ENCODE measurements at regions of chr12 and their contacts with region 1.

Region 1: GRCh38 chr12:125049093-125049458 is 16.2 kb upstream of the AACS start:
- DNase-seq: no peak
- H3K4me3 Mint-ChIP-seq: peak overlapping the region; percentile 73
- H3K27ac Mint-ChIP-seq: peak overlapping the region; percentile 69
- H3K4me1 Mint-ChIP-seq: peaks cover 8% of the 10 kb centered on the region
- H3K27me3 Mint-ChIP-seq: no peaks in the 10 kb centered on the region

Region 2: DNA sequence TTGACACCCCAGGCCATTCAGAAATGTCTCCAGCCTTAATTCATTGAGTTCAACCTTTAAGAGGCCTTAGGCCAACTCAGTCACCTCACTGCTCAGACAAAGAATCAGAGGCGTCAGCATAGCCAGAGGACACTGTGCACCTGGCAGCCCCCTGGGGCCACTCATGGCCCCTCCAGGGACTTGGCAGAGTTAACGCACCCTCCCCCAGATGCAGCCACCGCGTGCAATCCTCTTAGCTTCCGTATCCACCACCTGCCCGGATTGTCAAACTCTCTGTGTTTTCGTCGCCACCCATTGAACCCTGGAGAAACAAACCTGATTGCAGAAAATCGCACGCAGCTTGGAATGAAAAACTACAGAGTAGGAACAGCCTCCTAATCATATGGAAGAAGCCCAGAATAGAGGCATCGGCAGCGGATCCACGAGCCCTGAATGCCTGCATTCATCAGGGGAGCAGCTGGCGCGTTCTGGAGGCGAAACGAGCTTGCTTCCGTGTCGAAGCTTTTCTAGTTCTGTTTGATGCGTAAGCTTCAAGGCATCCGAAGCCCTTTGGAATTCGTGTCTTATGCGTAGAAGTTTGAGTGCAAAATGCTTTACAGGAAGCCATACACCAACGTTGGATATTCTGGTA is 33.3 kb before region 1 on chr12:
- CTCF ChIA-PET with region 1: no interaction called
- POLR2A ChIA-PET with region 1: no interaction called
- DNase-seq: no peak
- H3K4me3 Mint-ChIP-seq: no peak overlapping the region
- H3K27ac Mint-ChIP-seq: no peak overlapping the region
- H3K4me1 Mint-ChIP-seq: no peaks in the 10 kb centered on the region
- H3K27me3 Mint-ChIP-seq: no peaks in the 10 kb centered on the region

Region 3: GRCh38 chr12:125032536-125033319 is 16.3 kb before region 1 on chr12:
- CTCF ChIA-PET with region 1: no interaction called
- POLR2A ChIA-PET with region 1: no interaction called
- DNase-seq: no peak
- H3K4me3 Mint-ChIP-seq: no peak overlapping the region
- H3K27ac Mint-ChIP-seq: no peak overlapping the region
- H3K4me1 Mint-ChIP-seq: no peaks in the 10 kb centered on the region
- H3K27me3 Mint-ChIP-seq: no peaks in the 10 kb centered on the region

Region 4: GRCh38 chr12:125065021-125065795 is 16.1 kb after region 1 on chr12 and contains the start of gene AACS:
- CTCF ChIA-PET with region 1: interaction called, 4 read pairs
- POLR2A ChIA-PET with region 1: interaction called, 12 read pairs
- DNase-seq: peak; percentile 78
- H3K4me3 Mint-ChIP-seq: peak within 1 kb of the TSS; percentile 61
- H3K27ac Mint-ChIP-seq: peak within 1 kb of the TSS; percentile 40
- H3K4me1 Mint-ChIP-seq: peaks cover 16% of the 10 kb centered on the region
- H3K27me3 Mint-ChIP-seq: peaks cover 14% of the 10 kb centered on the region
- total RNA-seq, gene AACS: 17.1 to 17.2 TPM

Region 5: GRCh38 chr12:125079648-125080645 is 30.9 kb after region 1 on chr12:
- CTCF ChIA-PET with region 1: no interaction called
- POLR2A ChIA-PET with region 1: no interaction called
- DNase-seq: no peak
- H3K4me3 Mint-ChIP-seq: no peak overlapping the region
- H3K27ac Mint-ChIP-seq: no peak overlapping the region
- H3K4me1 Mint-ChIP-seq: no peaks in the 10 kb centered on the region
- H3K27me3 Mint-ChIP-seq: no peaks in the 10 kb centered on the region

Region 6: GRCh38 chr12:125183187-125184067 is 134.4 kb after region 1 on chr12:
- CTCF ChIA-PET with region 1: no interaction called
- POLR2A ChIA-PET with region 1: no interaction called
- DNase-seq: peak; percentile 75
- H3K4me3 Mint-ChIP-seq: no peak overlapping the region
- H3K27ac Mint-ChIP-seq: no peak overlapping the region
- H3K4me1 Mint-ChIP-seq: peaks cover 5% of the 10 kb centered on the region
- H3K27me3 Mint-ChIP-seq: peaks cover 48% of the 10 kb centered on the region